H1 (cell line): ENCODE measurements at regions of chr22 and their contacts with region 1.

Region 1: DNA sequence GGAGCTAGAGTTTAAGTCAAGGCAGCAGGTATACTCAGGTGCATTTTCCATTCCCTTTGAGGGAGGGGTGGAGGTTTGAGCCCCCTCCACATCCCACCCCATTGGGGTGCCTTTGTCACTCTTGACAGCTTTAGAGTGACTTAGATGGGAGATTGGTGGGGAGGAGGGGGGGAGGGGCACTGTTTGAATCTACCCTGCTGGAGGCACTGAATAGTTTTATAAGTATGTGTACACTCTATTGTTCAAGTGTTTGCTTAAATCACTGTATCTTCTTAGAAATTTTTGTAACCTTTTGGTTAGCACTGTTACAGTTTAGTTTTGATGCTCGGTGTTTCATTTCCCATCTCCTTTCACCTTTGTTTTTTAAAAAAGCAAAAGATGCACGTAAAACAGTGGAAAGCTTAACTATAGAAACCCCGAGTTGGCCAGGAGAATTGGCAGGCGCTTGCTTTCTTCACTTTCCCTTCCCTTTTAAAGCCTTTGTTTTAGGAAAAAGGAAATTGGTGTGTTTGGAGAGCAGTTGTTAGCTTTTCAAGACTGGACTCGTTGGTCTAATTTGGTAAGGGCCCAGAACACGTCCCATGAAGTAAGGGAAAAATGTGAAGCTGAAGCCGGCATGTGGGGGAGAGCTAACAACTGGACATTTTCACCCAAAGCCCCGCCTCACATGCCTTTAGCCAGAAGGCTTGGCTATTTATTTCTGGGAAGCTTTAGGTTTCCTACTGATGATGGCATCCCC is 42.8 kb downstream of the TNRC6B start:
- DNase-seq: no peak
- H3K4me3 ChIP-seq: no peak overlapping the region
- H3K27ac ChIP-seq: no peak overlapping the region
- H3K4me1 ChIP-seq: peaks cover 15 to 42% (median 23%) of the 10 kb centered on the region in 4 experiments
- H3K27me3 ChIP-seq: no peaks in the 10 kb centered on the region
- CTCF ChIP-seq: no peak
- EP300 ChIP-seq: no peak
- POLR2A ChIP-seq: no peak
- RAD21 ChIP-seq: no peak

Region 2: GRCh38 chr22:40094485-40094884 is 126.0 kb before region 1 on chr22:
- CTCF ChIA-PET with region 1: no interaction called
- POLR2A ChIA-PET with region 1: no interaction called
- DNase-seq: no peak
- H3K4me3 ChIP-seq: no peak overlapping the region
- H3K27ac ChIP-seq: no peak overlapping the region
- H3K4me1 ChIP-seq: no peaks in the 10 kb centered on the region
- H3K27me3 ChIP-seq: no peaks in the 10 kb centered on the region
- CTCF ChIP-seq: no peak
- EP300 ChIP-seq: no peak
- POLR2A ChIP-seq: no peak
- RAD21 ChIP-seq: no peak

Region 3: GRCh38 chr22:40177738-40178416 is 42.6 kb before region 1 on chr22 and contains the start of gene TNRC6B:
- CTCF ChIA-PET with region 1: no interaction called
- POLR2A ChIA-PET with region 1: interaction called, 11 read pairs
- DNase-seq: peak; percentile 65 to 75
- H3K4me3 ChIP-seq: peak within 1 kb of the TSS; percentile 71 to 95 (median 86)
- H3K27ac ChIP-seq: peak within 1 kb of the TSS; percentile 88
- H3K4me1 ChIP-seq: peaks cover 2 to 16% (median 9%) of the 10 kb centered on the region in 4 experiments; a peak in 6 of 7 replicates
- H3K27me3 ChIP-seq: no peaks in the 10 kb centered on the region
- CTCF ChIP-seq: no peak
- EP300 ChIP-seq: 0 out of 3 replicates have a peak, but pooled peaks of 1 of the 2 experiments have one; percentile 80
- POLR2A ChIP-seq: peak; percentile 97 to 99
- RAD21 ChIP-seq: no peak
- total RNA-seq, gene TNRC6B: 45.5 and 48.9 TPM in 2 replicates

Region 4: GRCh38 chr22:40323681-40324171 is 103.2 kb after region 1 on chr22:
- CTCF ChIA-PET with region 1: no interaction called
- POLR2A ChIA-PET with region 1: no interaction called
- DNase-seq: no peak
- H3K4me3 ChIP-seq: no peak overlapping the region
- H3K27ac ChIP-seq: no peak overlapping the region
- H3K4me1 ChIP-seq: peaks cover 4 to 13% (median 10%) of the 10 kb centered on the region in 4 experiments
- H3K27me3 ChIP-seq: no peaks in the 10 kb centered on the region
- CTCF ChIP-seq: no peak
- EP300 ChIP-seq: no peak
- POLR2A ChIP-seq: no peak
- RAD21 ChIP-seq: no peak